CD4-positive, alpha-beta T cell (primary cell): ENCODE measurements at regions of chr16 and their contacts with region 1.

Region 1: DNA sequence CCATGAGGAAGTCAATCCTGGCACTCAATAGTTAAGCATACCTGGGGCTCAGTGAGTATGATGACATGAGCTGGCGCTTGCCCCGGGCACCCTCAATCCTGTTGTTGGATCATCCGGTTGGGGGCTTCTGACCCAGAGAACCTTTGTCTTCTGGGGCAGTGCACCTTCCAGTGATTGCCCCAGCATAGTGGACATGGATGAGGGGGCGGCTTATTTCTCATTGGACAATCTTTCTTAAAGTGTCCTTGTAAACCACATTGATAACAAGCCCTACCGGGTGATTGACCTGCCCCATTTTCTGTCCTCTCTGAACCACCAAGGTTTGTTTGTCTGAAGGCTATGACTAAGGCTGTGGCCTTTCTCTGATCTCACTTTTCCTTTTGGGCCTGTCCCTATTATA is 18.2 kb downstream of the IGSF6 start:
- DNase-seq: no peak
- ATAC-seq: no peak
- H3K4me3 ChIP-seq: no peak overlapping the region
- H3K4me3 Mint-ChIP-seq: no peak overlapping the region
- H3K27ac ChIP-seq: no peak overlapping the region
- H3K27ac Mint-ChIP-seq: no peak overlapping the region
- H3K4me1 ChIP-seq: peaks cover 13% of the 10 kb centered on the region
- H3K4me1 Mint-ChIP-seq: peaks cover 18% of the 10 kb centered on the region
- H3K27me3 ChIP-seq: no peaks in the 10 kb centered on the region
- H3K27me3 Mint-ChIP-seq: no peaks in the 10 kb centered on the region
- CTCF ChIP-seq: no peak

Region 2: DNA sequence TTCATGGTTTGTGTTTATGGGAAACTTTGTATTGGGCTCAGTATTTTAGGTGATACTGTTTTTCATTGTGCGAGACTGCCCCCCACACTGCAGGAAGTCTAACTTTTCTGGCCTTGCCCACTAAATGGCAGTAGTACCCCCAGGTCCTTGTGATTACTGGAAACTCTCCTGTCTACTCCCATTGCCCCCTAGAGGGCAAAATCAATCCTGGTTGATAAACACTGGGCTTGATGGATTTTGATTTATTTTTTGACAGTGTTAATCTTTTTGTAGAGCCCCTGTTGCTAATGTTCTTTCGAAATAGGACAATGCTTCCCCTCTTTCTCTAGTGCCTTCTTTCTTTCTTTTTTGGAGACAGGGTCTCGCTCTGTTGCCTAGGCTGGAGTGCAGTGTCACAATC is 19.3 kb before region 1 on chr16:
- CTCF ChIA-PET with region 1: no interaction called
- POLR2A ChIA-PET with region 1: no interaction called
- intact Hi-C with region 1: loop called in 1 of 2 experiments (anchors 1 kb)
- DNase-seq: no peak
- ATAC-seq: no peak
- H3K4me3 ChIP-seq: no peak overlapping the region
- H3K4me3 Mint-ChIP-seq: no peak overlapping the region
- H3K27ac ChIP-seq: no peak overlapping the region
- H3K27ac Mint-ChIP-seq: no peak overlapping the region
- H3K4me1 ChIP-seq: peaks cover 28% of the 10 kb centered on the region
- H3K4me1 Mint-ChIP-seq: peaks cover 66% of the 10 kb centered on the region
- H3K27me3 ChIP-seq: no peaks in the 10 kb centered on the region
- H3K27me3 Mint-ChIP-seq: no peaks in the 10 kb centered on the region
- CTCF ChIP-seq: no peak